Activated CD4-positive, alpha-beta memory T cell treated with anti-CD3 and anti-CD28 coated beads, Interleukin-2, amount 10 ng/mL, durations not matched to agents 7 days and 5 days (primary cell): ENCODE measurements at regions of chr6 and their contacts with region 1.

Region 1: GRCh38 chr6:34656378-34657036 is 40.1 kb downstream of the ILRUN start:
- DNase-seq: peak; percentile 47
- H3K4me3 Mint-ChIP-seq: peak overlapping the region; percentile 67
- H3K27ac Mint-ChIP-seq: peak overlapping the region; percentile 95
- H3K4me1 Mint-ChIP-seq: peaks cover 53% of the 10 kb centered on the region
- H3K27me3 Mint-ChIP-seq: no peaks in the 10 kb centered on the region

Region 2: GRCh38 chr6:34671801-34672656 is 15.5 kb after region 1 on chr6:
- CTCF ChIA-PET with region 1: interaction called, 46 read pairs
- POLR2A ChIA-PET with region 1: interaction called, 191 read pairs
- DNase-seq: peak; percentile 84
- H3K4me3 Mint-ChIP-seq: peak overlapping the region; percentile 75
- H3K27ac Mint-ChIP-seq: peak overlapping the region; percentile 98
- H3K4me1 Mint-ChIP-seq: peaks cover 62% of the 10 kb centered on the region
- H3K27me3 Mint-ChIP-seq: no peaks in the 10 kb centered on the region

Region 3: GRCh38 chr6:34696739-34697543 is 40.4 kb after region 1 on chr6 and contains the start of gene ILRUN:
- CTCF ChIA-PET with region 1: no interaction called
- POLR2A ChIA-PET with region 1: interaction called, 41 read pairs
- DNase-seq: peak; percentile 97
- H3K4me3 Mint-ChIP-seq: peak within 1 kb of the TSS; percentile 88
- H3K27ac Mint-ChIP-seq: peak within 1 kb of the TSS; percentile 85
- H3K4me1 Mint-ChIP-seq: peaks cover 44% of the 10 kb centered on the region
- H3K27me3 Mint-ChIP-seq: no peaks in the 10 kb centered on the region
- total RNA-seq, gene ILRUN: 85.3 to 86.6 TPM

Region 4: DNA sequence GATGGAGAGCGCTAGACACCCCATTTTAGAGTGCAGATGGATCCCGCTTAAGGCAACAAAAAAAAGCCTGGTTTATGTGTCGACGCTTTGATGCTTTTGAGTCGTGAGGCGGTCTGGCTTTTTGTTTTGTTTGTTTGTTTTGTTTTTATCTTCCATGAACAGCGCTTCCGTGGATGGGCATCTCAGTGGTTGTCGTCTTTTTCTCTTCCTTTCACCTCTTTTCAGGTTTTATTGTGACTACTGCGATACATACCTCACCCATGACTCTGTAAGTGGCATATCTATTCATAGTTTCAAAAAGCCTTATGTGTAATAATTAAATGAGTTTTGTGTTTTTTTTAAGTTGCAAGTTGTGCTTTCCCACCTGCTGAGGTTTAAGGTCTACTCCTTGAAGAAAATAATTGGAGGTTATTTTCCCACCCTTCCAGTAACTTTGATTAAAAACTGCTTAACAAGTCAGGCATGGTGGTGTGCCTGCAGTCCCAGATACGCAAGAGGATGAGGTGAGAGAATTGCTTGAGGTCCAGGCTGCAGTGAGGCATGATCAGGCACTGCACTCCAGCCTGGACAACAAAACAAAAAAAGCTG is 101.3 kb after region 1 on chr6:
- CTCF ChIA-PET with region 1: interaction called, 3 read pairs
- POLR2A ChIA-PET with region 1: interaction called, 12 read pairs
- DNase-seq: no peak
- H3K4me3 Mint-ChIP-seq: no peak overlapping the region
- H3K27ac Mint-ChIP-seq: no peak overlapping the region
- H3K4me1 Mint-ChIP-seq: peaks cover 13% of the 10 kb centered on the region
- H3K27me3 Mint-ChIP-seq: no peaks in the 10 kb centered on the region